Transverse colon (tissue), 4 donors: ENCODE measurements at regions of chr5 and their contacts with region 1.

Region 1: DNA sequence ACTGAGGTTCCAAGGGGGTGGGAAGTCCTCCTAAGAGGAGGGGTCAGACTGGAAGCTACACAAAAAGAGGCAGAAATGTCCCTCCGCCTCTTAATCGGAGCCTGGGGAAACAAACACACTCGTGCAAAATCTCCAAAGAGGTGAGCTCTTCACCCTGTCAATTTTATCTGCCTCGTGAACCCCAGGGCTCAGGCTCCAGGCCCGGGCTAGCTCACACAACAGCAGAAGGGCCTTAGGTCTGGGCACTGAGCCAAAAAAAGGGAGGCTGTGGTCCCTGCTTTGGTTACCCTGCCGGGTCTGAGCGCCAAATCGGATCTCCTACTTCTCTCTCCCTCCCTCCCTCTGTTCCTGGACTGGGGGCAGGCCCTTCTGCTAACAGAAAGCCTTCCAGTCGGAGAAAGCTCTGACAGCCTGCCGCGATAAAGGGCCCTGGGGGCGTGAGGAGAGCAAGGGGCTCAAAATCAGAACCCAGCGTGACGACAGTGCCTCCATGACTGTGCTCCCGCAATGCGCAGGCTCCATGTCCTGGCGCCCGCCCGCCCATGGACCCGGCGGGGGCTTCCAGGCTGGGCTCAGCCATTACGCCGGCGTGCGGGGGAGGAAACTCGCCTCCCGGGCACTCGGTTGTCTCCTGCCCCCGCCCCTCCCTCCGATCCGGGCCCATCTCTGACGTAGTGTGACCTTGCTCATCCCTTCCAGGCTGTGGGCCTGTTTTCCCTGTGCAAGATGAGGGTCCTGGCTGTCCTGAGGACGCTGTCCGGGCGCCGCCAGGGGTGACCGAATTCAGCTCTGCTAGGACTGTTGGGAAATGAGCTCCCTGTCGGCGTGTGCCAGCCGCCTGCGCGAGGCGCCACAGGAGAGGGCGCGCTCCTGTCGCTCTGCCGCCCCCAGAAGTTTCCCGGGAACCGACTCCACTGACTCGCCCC is 865 bp upstream of the SLC22A4 start:
- DNase-seq: peak; percentile 86
- H3K4me3 ChIP-seq: peak overlapping the region; percentile 48 to 65 (median 56)
- H3K27ac ChIP-seq: peak overlapping the region; percentile 92 to 96 (median 94)
- H3K4me1 ChIP-seq: peaks cover 10 to 28% (median 24%) of the 10 kb centered on the region in 4 donors
- H3K27me3 ChIP-seq: no peaks in the 10 kb centered on the region
- CTCF ChIP-seq: peak in 3 of 5 experiments; percentile 13 to 30 (median 22)
- EP300 ChIP-seq: peak; percentile 28
- POLR2A ChIP-seq: no peak

Region 2: DNA sequence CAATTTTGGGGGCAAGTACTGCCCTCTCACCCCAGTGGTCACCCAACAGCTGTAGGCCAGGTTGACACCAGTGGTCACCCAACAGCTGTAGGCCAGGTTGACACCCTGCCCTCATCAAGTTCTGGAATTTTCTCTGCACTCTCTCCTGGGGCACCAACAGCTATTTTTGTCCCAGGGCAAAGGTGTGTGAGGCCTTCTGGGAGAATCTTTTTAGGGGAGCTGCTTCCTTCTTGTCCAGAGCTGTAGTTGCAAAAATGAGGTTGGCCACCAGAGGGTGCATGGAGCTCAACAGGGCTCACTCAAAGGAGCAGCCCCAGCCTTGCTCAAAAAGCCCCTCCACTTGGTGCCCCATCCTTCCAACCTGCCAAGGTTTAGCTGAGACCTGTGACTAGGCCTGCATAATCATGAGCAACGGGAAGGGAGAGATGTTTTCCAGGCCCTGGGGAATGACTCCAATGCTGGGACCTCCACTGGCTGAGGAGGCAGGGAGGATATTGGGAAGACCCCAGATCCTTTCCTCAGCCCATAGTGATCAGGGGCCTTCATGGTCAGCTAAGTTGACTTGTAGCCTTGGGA is 55.1 kb before region 1 on chr5:
- in situ Hi-C with region 1: no loop called
- intact Hi-C with region 1: loop called (anchors 10 kb)
- DNase-seq: peak; percentile 83
- H3K4me3 ChIP-seq: no peak overlapping the region
- H3K27ac ChIP-seq: no peak overlapping the region
- H3K4me1 ChIP-seq: no peaks in the 10 kb centered on the region
- H3K27me3 ChIP-seq: no peaks in the 10 kb centered on the region
- CTCF ChIP-seq: peak; percentile 79 to 87 (median 84)
- EP300 ChIP-seq: no peak
- POLR2A ChIP-seq: no peak

Region 3: DNA sequence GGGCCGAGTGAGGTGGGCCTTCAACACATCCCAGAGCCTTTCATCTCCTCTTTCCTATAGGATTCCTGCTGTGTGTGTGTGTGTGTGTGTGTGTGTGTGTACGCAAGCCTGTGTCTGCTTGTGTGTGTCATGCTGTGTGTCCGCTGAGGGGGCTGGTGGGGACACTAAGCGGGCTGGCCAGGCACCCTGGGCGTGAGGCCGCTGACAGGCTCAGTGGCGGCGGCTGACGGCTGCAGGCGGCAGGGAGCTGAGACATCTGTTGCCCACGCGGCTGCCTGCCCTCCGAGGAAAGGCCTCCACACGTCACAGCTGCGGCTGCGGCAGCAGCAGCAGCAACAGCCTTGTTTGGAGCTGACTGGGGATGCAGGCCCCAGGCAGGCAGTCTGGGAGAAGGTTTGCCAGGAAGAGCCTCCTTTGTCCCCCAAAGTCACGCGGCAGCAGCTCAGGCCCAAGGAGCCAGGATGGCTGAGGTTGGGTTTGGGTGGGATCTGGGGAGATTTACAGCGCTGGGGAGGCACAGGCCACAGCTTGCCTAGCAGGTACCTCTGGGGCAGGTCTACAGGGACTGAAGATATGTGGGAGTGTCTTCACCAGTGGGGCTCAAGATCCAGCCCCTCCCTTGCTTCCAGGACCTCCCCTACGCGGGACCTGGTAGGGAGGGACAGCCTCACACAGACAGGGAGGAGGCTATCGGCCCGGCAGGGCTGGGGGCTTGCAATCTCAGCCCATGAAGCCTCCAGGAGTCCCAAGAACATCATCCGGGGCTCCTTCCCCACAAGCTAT is 34.1 kb before region 1 on chr5:
- in situ Hi-C with region 1: no loop called
- intact Hi-C with region 1: loop called (anchors 5 kb)
- DNase-seq: peak; percentile 56
- H3K4me3 ChIP-seq: peak overlapping the region in 3 of 4 donors; percentile 45 to 67 (median 59)
- H3K27ac ChIP-seq: peak overlapping the region; percentile 87 to 97 (median 94)
- H3K4me1 ChIP-seq: peaks cover 12 to 57% (median 41%) of the 10 kb centered on the region in 4 donors
- H3K27me3 ChIP-seq: peaks cover 17% of the 10 kb centered on the region
- CTCF ChIP-seq: no peak
- EP300 ChIP-seq: peak; percentile 40
- POLR2A ChIP-seq: peak; percentile 58